Right ventricle myocardium inferior (tissue), 1 donor: ENCODE measurements at regions of chr5 and their contacts with region 1.

Region 1: GRCh38 chr5:82641331-82642003 is 363.3 kb upstream of the RPS23 start:
- DNase-seq: no peak
- ATAC-seq: peak; percentile 91

Region 2: GRCh38 chr5:83430130-83431010 is 788.9 kb after region 1 on chr5:
- intact Hi-C with region 1: loop called (anchors 5 kb)
- DNase-seq: no peak
- ATAC-seq: peak; percentile 83

Region 3: DNA sequence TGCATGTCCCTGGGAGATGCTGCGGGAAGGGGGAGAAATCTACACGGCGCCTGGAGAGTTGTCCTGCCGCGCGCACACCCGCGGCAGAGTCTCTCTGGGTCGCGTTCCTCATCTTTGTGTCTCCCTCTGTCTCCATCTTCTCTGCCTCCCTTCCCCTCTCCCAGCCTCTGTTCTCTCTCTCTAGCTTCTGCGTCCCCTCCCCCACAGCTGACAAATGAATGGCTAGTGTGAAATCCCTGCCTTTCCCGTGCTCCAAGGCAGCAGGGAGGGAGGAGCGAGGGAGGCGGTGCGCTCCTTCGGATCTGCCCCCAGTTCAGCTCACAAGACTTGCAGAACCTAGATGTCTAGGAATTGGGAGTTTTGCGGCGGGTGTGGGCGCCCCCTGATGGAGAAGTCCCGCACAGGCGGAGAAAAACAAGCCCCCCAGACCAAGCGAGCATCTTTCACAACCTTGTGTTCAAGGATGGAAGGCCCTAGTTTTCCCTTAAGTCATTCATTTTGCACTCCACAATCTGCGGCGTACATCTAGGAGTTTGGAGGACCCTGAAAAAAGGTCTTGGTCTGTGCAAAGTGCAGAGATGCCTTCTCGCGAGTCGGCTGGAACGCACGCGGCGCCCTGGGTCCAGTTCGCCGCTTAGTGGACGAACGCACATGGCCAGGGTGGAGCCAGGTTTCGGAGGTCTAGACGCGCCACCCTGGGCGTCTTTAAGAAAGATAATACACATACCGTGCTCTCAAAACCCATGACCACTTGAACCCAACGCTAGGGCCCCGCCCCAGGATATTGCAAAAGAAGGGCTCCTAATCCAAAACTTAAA is 832.1 kb after region 1 on chr5:
- intact Hi-C with region 1: loop called (anchors 1 kb)
- DNase-seq: peak; percentile 92
- ATAC-seq: peak; percentile 83